ENCODE measurements at regions of chr12 and their contacts with region 1.

Region 1: GRCh38 chr12:66169221-66170170 is at the start of gene TMBIM4:
- DNase-seq: peak; percentile 93
- H3K4me3 Mint-ChIP-seq: peak within 1 kb of the TSS; percentile 97
- H3K27ac Mint-ChIP-seq: peak within 1 kb of the TSS; percentile 99
- H3K4me1 Mint-ChIP-seq: peaks cover 47% of the 10 kb centered on the region
- H3K27me3 Mint-ChIP-seq: no peaks in the 10 kb centered on the region
- total RNA-seq, gene TMBIM4: 63.7 to 66.7 TPM

Region 2: GRCh38 chr12:66130277-66131066 is 39.0 kb before region 1 on chr12 and contains the start of gene LLPH:
- CTCF ChIA-PET with region 1: no interaction called
- POLR2A ChIA-PET with region 1: interaction called, 37 read pairs
- intact Hi-C with region 1: loop called (anchors 1 kb)
- DNase-seq: peak; percentile 94
- H3K4me3 Mint-ChIP-seq: peak within 1 kb of the TSS; percentile 96
- H3K27ac Mint-ChIP-seq: peak within 1 kb of the TSS; percentile 94
- H3K4me1 Mint-ChIP-seq: peaks cover 50% of the 10 kb centered on the region
- H3K27me3 Mint-ChIP-seq: no peaks in the 10 kb centered on the region
- total RNA-seq, gene LLPH: 29.1 to 31.2 TPM

Region 3: GRCh38 chr12:66188584-66189485 is 19.3 kb after region 1 on chr12 and contains the start of gene IRAK3:
- CTCF ChIA-PET with region 1: interaction called, 5 read pairs
- POLR2A ChIA-PET with region 1: interaction called, 10 read pairs
- intact Hi-C with region 1: no loop called
- DNase-seq: peak; percentile 50
- H3K4me3 Mint-ChIP-seq: peak within 1 kb of the TSS; percentile 64
- H3K27ac Mint-ChIP-seq: no peak within 1 kb of the TSS
- H3K4me1 Mint-ChIP-seq: peaks cover 8% of the 10 kb centered on the region
- H3K27me3 Mint-ChIP-seq: peaks cover 44% of the 10 kb centered on the region
- total RNA-seq, gene IRAK3: 0.45 to 0.46 TPM

Region 4: DNA sequence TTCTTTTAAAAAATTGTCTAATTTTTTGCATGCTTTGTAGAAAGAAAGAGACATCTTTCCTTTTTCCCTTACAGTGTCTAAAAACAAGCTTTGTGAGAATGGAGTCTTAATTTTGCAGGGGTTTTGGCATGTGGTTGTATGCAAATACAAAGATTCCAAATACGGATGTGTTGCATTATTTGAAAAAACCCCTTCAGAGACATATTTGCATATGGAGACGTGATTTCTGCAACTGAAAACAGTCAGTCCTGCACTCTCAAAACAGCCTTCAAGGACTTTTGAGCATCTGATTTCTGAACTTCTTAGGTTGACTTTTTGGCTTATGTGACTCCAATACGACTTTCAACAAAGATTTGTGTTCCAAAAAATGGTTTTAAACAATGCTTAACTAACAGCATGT is 27.3 kb after region 1 on chr12:
- CTCF ChIA-PET with region 1: interaction called, 5 read pairs
- POLR2A ChIA-PET with region 1: interaction called, 3 read pairs
- intact Hi-C with region 1: loop called (anchors 2 kb)
- DNase-seq: no peak
- H3K4me3 Mint-ChIP-seq: no peak overlapping the region
- H3K27ac Mint-ChIP-seq: no peak overlapping the region
- H3K4me1 Mint-ChIP-seq: peaks cover 12% of the 10 kb centered on the region
- H3K27me3 Mint-ChIP-seq: peaks cover 21% of the 10 kb centered on the region

Region 5: GRCh38 chr12:66235626-66236281 is 66.3 kb after region 1 on chr12:
- CTCF ChIA-PET with region 1: interaction called, 5 read pairs
- POLR2A ChIA-PET with region 1: interaction called, 4 read pairs
- intact Hi-C with region 1: loop called (anchors 1 kb)
- DNase-seq: no peak
- H3K4me3 Mint-ChIP-seq: peak overlapping the region; percentile 45
- H3K27ac Mint-ChIP-seq: no peak overlapping the region
- H3K4me1 Mint-ChIP-seq: peaks cover 5% of the 10 kb centered on the region
- H3K27me3 Mint-ChIP-seq: peaks cover 31% of the 10 kb centered on the region

Region 6: GRCh38 chr12:66279123-66279712 is 109.7 kb after region 1 on chr12:
- CTCF ChIA-PET with region 1: interaction called, 4 read pairs
- POLR2A ChIA-PET with region 1: interaction called, 4 read pairs
- intact Hi-C with region 1: loop called (anchors 5 kb)
- DNase-seq: peak; percentile 60
- H3K4me3 Mint-ChIP-seq: no peak overlapping the region
- H3K27ac Mint-ChIP-seq: no peak overlapping the region
- H3K4me1 Mint-ChIP-seq: peaks cover 38% of the 10 kb centered on the region
- H3K27me3 Mint-ChIP-seq: no peaks in the 10 kb centered on the region

Region 7: GRCh38 chr12:66482351-66483203 is 313.1 kb after region 1 on chr12:
- CTCF ChIA-PET with region 1: no interaction called
- POLR2A ChIA-PET with region 1: no interaction called
- intact Hi-C with region 1: no loop called
- DNase-seq: no peak
- H3K4me3 Mint-ChIP-seq: no peak overlapping the region
- H3K27ac Mint-ChIP-seq: no peak overlapping the region
- H3K4me1 Mint-ChIP-seq: no peaks in the 10 kb centered on the region
- H3K27me3 Mint-ChIP-seq: peaks cover 1% of the 10 kb centered on the region

Measured in activated CD4-positive, alpha-beta memory T cell treated with anti-CD3 and anti-CD28 coated beads for 36 hours (primary cell).